ENCODE measurements at regions of chr1 and their contacts with region 1.

Region 1: DNA sequence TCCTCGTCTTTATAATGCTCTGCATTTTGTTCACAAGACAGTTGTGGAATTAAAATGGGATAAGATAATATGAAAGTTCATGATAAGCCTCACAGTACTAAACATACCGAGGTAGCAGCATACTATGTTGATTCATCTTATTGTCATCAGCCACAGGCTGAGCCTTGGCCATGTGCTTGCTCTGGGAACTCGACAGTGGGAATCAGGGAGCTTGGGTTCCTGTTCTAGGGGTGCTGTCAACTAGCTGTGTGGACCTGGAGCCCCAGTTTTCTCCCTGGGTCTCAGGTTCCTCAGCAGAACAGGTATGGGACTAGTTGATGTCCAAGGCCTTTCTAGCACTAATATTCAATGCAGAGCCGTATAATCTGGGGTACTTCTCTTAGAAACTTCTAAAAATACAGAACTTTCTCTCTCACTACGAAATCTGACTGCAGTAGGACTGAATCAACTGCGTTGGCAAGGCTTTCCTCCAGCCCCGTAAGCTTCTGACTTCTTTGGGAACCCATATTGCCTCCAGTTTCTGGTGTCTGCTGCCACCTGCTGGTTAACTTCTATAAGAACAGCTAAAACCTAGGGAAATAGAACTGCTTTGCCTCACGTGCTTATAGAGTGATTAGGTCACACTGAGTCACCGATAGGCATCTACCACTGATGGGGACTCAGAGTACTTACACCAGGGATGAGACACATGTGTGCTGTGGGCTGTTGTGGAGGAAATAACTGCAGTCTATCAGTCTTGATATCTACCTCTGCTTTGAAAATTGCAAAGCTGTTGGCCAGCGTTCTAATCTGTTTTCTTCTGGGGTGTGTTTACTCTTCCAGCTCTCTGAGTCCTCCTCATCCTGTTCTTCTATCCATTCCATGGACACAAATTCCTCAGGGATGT is 110.9 kb downstream of the RGL1 start:
- DNase-seq: peak; percentile 82 to 93 (median 88)
- H3K4me3 ChIP-seq: no peak overlapping the region
- H3K27ac ChIP-seq: peak overlapping the region in 4 of 5 donors; percentile 57 to 81 (median 70)
- H3K4me1 ChIP-seq: peaks cover 10 to 23% of the 10 kb centered on the region in 2 donors
- H3K27me3 ChIP-seq: no peaks in the 10 kb centered on the region
- CTCF ChIP-seq: peak; percentile 81 to 97 (median 94)
- POLR2A ChIP-seq: no peak

Region 2: DNA sequence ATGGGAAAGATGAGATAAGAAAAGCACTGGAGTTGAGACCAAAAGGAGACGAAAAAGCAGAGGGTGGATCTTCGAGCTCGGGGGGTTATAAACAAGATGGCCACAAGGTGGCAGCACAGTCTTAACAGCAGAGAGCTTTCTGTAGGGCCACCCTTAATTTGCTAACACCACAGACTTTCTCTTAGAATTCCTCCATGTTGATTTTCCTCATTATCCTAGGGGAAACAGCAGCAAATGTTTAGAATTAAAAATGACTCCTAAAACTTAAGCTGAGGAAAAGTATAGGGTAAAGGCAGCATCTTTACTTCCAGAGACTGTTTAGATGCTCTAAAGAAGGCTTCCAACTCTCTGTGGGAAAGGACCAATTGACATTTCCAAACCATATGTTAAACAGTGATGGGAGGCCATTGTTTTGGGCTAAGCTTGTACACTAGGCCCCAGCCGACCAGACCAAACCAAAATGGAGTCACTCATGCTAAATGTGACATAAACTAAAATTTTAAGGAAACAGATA is 260.2 kb before region 1 on chr1:
- intact Hi-C with region 1: loop called (anchors 2 to 5 kb)
- DNase-seq: peak; percentile 76 to 96 (median 88)
- H3K4me3 ChIP-seq: no peak overlapping the region
- H3K27ac ChIP-seq: no peak overlapping the region
- H3K4me1 ChIP-seq: peaks cover 0 to 16% of the 10 kb centered on the region in 2 donors
- H3K27me3 ChIP-seq: no peaks in the 10 kb centered on the region
- CTCF ChIP-seq: peak; percentile 85 to 95 (median 91)
- POLR2A ChIP-seq: no peak

Region 3: GRCh38 chr1:184228558-184228957 is 312.7 kb after region 1 on chr1:
- intact Hi-C with region 1: no loop called
- DNase-seq: no peak
- H3K4me3 ChIP-seq: no peak overlapping the region
- H3K27ac ChIP-seq: no peak overlapping the region
- H3K4me1 ChIP-seq: no peaks in the 10 kb centered on the region
- H3K27me3 ChIP-seq: no peaks in the 10 kb centered on the region
- CTCF ChIP-seq: no peak
- POLR2A ChIP-seq: no peak